Dendritic cell treated with granulocyte-macrophage colony-stimulating factor and Interleukin-4, amounts not matched to agents 40 ng/mL and 50 ng/mL, for 4 days (primary cell): ENCODE measurements at regions of chr1 and their contacts with region 1.

Region 1: GRCh38 chr1:32215629-32216480 is 6.3 kb downstream of the TMEM234 start:
- H3K4me3 Mint-ChIP-seq: no peak overlapping the region
- H3K27ac Mint-ChIP-seq: peak overlapping the region; percentile 70
- H3K4me1 Mint-ChIP-seq: peaks cover 33% of the 10 kb centered on the region
- H3K27me3 Mint-ChIP-seq: no peaks in the 10 kb centered on the region

Region 2: DNA sequence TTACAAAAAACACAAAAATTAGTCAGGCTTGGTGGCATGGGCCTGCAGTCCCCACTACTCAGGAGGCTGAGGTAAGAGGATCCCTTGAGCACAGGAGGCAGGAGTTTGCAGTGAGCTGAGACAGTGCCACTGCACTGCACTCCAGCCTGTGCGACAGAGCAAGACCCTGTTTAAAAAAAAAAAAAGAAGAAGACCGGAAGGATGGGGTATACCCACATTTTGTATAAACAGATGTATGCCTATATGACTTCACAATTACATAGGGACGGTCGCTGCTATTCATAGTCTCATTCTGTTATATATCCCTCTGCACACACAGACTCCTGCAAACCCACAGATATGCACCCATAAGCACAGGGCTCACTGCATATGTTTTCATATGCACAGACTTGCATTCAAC is 47.9 kb after region 1 on chr1:
- intact Hi-C with region 1: no loop called
- H3K4me3 Mint-ChIP-seq: no peak overlapping the region
- H3K27ac Mint-ChIP-seq: no peak overlapping the region
- H3K4me1 Mint-ChIP-seq: peaks cover 11% of the 10 kb centered on the region
- H3K27me3 Mint-ChIP-seq: peaks cover 1% of the 10 kb centered on the region

Region 3: GRCh38 chr1:32372149-32372756 is 156.4 kb after region 1 on chr1:
- intact Hi-C with region 1: loop called (anchors 10 kb)
- H3K4me3 Mint-ChIP-seq: no peak overlapping the region
- H3K27ac Mint-ChIP-seq: no peak overlapping the region
- H3K4me1 Mint-ChIP-seq: peaks cover 9% of the 10 kb centered on the region
- H3K27me3 Mint-ChIP-seq: no peaks in the 10 kb centered on the region

Region 4: DNA sequence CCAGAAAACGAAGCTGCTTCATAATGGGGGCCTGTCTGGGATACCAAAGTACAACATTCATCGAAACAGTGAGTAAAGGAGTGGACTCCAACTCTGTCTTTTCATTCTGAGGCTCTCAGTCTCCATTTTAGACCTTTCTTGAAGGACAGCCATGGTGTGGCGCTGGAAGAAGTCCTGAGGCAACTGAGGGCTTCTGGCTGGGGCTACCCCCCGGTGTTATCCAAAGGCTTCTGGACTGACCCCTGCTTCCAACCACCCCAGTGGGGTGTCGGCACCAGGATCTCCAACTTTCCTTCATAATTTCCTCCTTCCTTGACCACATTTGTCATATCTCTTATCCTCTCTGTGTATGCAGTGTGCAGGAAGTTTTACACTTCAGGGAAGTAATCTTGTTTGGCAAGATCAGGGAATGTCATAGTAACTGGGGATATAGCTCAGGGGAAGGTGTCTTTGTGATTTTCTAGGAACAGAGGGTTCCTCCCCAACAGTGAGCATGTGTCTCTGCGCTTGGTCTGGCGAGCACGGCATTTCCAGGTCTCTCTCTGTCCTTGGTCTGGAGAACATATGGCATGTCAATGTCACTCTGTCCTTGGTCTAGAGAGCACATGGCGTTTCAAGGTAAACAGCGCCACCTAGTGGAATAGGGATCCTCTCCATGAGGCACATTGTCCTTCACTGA is 197.8 kb after region 1 on chr1:
- intact Hi-C with region 1: loop called (anchors 5 kb)
- H3K4me3 Mint-ChIP-seq: no peak overlapping the region
- H3K27ac Mint-ChIP-seq: peak overlapping the region; percentile 54
- H3K4me1 Mint-ChIP-seq: peaks cover 4% of the 10 kb centered on the region
- H3K27me3 Mint-ChIP-seq: peaks cover 20% of the 10 kb centered on the region